Activated CD4-positive, alpha-beta T cell treated with anti-CD3 and anti-CD28 coated beads for 36 hours (primary cell): ENCODE measurements at regions of chr10 and their contacts with region 1.

Region 1: GRCh38 chr10:112981553-112981952 is 31.5 kb downstream of the TCF7L2 start:
- DNase-seq: peak; percentile 68
- ATAC-seq: peak; percentile 61
- H3K4me3 Mint-ChIP-seq: no peak overlapping the region
- H3K27ac Mint-ChIP-seq: no peak overlapping the region
- H3K4me1 Mint-ChIP-seq: peaks cover 27% of the 10 kb centered on the region
- H3K27me3 Mint-ChIP-seq: peaks cover 63% of the 10 kb centered on the region

Region 2: DNA sequence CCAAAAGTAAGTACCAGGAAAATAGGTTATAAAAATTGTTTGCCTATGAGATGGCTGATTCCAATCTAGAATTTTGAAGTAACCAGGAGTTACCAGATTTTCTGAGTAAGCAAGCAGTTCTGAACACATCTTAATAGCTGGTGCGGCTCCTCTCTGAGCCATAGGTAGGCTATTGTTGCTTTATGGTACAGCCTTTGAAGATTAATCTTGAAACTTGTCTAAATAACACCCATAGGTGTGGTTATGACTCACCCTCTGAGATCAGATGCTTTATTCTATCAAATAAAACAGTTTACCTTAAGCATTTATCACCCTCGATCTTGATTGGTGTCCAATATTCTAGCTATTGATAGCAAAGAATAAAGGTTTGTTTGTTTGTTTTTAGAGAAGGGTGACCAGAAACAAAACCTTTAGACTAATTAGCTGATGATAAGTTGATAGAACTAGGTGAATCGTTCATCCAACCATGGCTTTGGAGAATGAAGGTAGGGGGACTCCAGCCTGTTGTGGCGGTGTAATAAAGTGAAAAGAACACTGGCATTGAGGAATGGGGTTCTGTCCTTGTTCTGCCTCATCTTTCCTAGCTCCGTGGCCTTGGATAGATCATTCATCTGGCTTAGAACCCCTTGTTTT is 462.3 kb before region 1 on chr10:
- CTCF ChIA-PET with region 1: no interaction called
- POLR2A ChIA-PET with region 1: no interaction called
- intact Hi-C with region 1: loop called in 1 of 2 experiments (anchors 5 kb)
- DNase-seq: peak; percentile 44
- ATAC-seq: peak; percentile 99
- H3K4me3 Mint-ChIP-seq: no peak overlapping the region
- H3K27ac Mint-ChIP-seq: no peak overlapping the region
- H3K4me1 Mint-ChIP-seq: peaks cover 14% of the 10 kb centered on the region
- H3K27me3 Mint-ChIP-seq: no peaks in the 10 kb centered on the region

Region 3: DNA sequence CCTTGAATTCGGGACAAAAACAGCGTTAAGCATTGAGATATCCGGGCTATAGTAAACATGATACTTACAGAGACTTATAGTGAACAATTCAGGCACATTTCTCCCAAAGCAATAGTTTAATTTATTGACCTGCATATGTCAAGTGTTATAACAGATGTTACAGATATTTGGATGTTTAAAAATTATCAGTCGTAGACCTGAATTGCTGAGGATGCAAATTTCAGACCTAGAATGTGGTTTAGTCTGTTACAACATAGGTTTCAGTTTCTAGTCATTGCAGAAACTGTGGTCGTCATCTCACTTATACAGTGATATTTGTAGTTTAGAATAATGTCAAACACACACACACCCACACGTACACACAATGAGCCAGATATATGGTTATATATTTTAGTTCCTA is 449.4 kb before region 1 on chr10:
- CTCF ChIA-PET with region 1: no interaction called
- POLR2A ChIA-PET with region 1: no interaction called
- intact Hi-C with region 1: loop called (anchors 2 to 5 kb)
- DNase-seq: peak; percentile 13
- ATAC-seq: peak; percentile 92
- H3K4me3 Mint-ChIP-seq: no peak overlapping the region
- H3K27ac Mint-ChIP-seq: no peak overlapping the region
- H3K4me1 Mint-ChIP-seq: peaks cover 32% of the 10 kb centered on the region
- H3K27me3 Mint-ChIP-seq: peaks cover 2% of the 10 kb centered on the region

Region 4: DNA sequence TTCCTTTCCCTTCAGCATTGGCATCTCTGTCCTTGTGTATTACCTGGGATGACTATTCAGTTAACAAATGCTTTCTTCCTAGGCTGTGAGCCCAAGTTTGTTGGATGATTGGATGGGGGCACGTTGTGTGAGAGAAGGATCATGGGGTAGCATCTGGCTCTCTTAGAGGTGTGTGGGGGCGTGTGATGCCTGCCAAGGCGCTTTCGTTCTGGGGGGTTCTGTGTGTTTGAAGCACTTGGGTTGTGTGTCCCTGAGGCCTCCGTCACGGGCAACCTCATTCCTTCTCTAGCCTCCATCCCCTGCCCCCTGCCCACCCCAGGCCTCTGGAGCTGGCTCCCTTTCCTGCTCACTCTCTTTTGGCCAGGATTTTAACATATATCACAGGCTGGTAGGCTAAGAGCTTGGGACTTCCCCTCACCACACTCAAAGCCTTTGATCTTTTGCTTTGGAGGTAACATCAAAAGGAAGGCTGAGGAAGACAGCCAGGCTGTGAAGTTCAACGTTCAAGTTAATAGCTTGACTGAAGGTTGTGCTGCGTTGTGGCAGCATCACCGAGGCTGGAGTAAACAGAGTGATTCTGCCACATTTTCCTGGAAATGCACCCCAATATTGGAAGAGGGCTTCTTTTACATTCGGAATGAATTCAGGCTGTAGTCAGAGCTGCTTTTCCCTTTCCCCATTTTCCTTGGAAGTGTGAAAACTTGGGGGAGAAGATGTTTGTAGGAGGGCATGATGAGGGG is 25.6 kb after region 1 on chr10:
- CTCF ChIA-PET with region 1: no interaction called
- POLR2A ChIA-PET with region 1: no interaction called
- intact Hi-C with region 1: loop called (anchors 1 kb)
- DNase-seq: peak; percentile 57
- ATAC-seq: peak; percentile 98
- H3K4me3 Mint-ChIP-seq: peak overlapping the region; percentile 49
- H3K27ac Mint-ChIP-seq: no peak overlapping the region
- H3K4me1 Mint-ChIP-seq: peaks cover 24% of the 10 kb centered on the region
- H3K27me3 Mint-ChIP-seq: peaks cover 74% of the 10 kb centered on the region

Region 5: DNA sequence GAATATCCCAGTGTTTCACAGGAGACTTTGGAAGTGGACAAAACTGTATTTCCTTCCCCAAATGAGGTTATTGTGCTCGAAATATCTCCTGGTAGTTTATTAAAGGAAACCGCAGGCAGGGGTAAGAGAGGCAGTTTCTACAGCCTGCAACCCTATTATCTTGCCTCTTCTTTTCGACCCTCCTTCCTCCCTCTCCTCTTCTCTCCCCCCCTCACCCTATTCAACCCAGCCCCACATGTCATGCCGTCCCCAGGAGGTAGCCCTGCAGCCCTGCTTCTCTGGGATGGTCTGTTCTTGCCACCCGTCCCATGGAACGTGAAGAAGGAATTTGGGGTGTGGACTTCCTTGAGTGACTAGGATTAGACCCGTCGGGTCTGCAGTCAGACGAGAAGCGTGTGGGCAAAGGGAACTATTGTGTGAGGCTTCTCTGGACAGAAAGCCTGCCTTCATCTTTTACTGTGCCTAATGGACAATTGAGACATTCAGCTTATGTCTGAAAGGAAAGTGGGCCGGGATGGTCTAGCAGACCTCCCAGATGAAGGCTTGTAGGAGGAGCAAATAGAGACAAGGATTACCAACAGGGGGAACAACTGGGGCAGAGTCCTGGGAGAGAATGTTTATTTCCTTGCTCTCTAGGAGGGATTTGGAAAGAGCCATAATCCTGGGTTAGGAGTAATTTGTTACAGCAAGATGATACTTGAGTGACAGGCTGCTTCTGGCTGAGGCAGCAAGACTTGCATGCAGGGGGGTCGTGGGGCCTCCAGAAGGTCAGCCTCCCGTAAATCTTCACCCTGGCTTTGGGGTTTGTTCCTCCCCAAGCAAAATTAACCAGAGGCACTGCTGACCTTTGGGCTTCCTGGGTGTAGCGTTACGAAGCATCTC is 46.3 kb after region 1 on chr10:
- CTCF ChIA-PET with region 1: no interaction called
- POLR2A ChIA-PET with region 1: no interaction called
- intact Hi-C with region 1: no loop called
- DNase-seq: no peak
- ATAC-seq: no peak
- H3K4me3 Mint-ChIP-seq: no peak overlapping the region
- H3K27ac Mint-ChIP-seq: no peak overlapping the region
- H3K4me1 Mint-ChIP-seq: no peaks in the 10 kb centered on the region
- H3K27me3 Mint-ChIP-seq: peaks cover 11% of the 10 kb centered on the region

Region 6: DNA sequence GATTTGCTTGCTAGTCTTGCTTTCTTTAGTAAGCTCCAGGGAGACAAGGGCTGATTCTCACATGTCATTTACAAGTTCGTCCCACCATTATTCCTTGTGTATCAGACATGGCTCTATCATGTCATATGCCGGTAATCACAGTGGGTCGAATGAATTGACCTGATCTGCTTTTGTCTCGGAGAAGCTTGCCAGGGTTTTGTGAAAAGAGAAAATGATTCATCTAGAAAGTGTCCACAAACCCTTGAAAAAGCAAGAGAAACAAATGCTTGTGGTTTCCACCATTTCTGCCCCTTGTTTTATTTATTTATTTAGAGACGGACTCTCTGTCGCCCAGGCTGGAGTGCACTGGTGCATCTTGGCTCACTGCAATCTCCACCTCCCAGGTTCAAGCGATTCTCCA is 247.0 kb after region 1 on chr10:
- CTCF ChIA-PET with region 1: no interaction called
- POLR2A ChIA-PET with region 1: no interaction called
- intact Hi-C with region 1: loop called in 1 of 2 experiments (anchors 5 kb)
- DNase-seq: no peak
- ATAC-seq: no peak
- H3K4me3 Mint-ChIP-seq: no peak overlapping the region
- H3K27ac Mint-ChIP-seq: no peak overlapping the region
- H3K4me1 Mint-ChIP-seq: peaks cover 21% of the 10 kb centered on the region
- H3K27me3 Mint-ChIP-seq: peaks cover 36% of the 10 kb centered on the region